ENCODE measurements at regions of chr1 and their contacts with region 1.

Region 1: GRCh38 chr1:112882271-112882744 is 73.7 kb downstream of the SLC16A1 start:
- DNase-seq: no peak
- H3K4me3 Mint-ChIP-seq: no peak overlapping the region
- H3K27ac Mint-ChIP-seq: no peak overlapping the region
- H3K4me1 Mint-ChIP-seq: no peaks in the 10 kb centered on the region
- H3K27me3 Mint-ChIP-seq: peaks cover 31% of the 10 kb centered on the region

Region 2: DNA sequence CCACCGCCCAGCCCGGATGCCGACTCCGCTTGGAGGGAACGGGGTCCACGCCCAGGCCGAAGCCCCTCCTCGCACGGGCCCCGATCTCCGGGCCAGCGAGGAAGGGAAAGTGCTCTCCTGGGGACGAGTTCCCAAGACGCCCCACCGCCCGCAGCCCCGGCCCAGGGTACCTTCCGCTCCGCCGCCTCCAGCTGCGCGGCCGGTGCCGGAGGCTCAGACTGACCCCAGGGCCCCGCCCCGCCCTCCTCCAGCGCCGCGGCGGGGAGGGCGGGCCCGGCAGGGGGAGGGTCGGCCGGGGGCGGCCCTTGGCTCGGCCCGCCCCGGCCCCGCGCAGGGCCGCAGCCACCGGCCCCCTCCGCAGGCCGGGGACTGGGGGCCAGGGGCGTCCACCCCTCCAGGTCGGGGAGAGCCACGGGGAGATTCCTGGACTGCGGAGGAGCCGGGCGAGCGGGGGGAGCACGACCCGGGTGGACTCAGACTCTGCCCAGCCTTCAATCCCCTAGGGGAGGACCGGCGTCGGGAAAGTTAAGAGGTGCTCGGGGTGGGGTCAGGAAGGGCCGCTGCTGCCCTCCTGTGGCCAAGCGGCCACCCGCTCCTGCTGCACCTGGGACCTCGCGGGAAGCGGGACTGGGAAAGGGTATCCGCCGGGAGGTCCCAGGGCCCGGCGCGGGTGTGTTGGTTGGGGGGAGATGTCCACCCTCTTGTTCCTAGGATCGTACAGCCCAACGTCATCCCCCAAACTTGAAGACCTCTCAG is 175.2 kb before region 1 on chr1 and contains the start of gene RHOC:
- CTCF ChIA-PET with region 1: no interaction called
- DNase-seq: peak; percentile 73
- H3K4me3 Mint-ChIP-seq: peak within 1 kb of the TSS; percentile 81
- H3K27ac Mint-ChIP-seq: no peak within 1 kb of the TSS
- H3K4me1 Mint-ChIP-seq: peaks cover 45% of the 10 kb centered on the region
- H3K27me3 Mint-ChIP-seq: peaks cover 49% of the 10 kb centered on the region

Region 3: GRCh38 chr1:113042285-113043143 is 160.2 kb after region 1 on chr1:
- CTCF ChIA-PET with region 1: interaction called, 14 read pairs
- DNase-seq: peak; percentile 41
- H3K4me3 Mint-ChIP-seq: no peak overlapping the region
- H3K27ac Mint-ChIP-seq: no peak overlapping the region
- H3K4me1 Mint-ChIP-seq: peaks cover 50% of the 10 kb centered on the region
- H3K27me3 Mint-ChIP-seq: peaks cover 10% of the 10 kb centered on the region

Region 4: GRCh38 chr1:113353581-113353980 is 471.3 kb after region 1 on chr1:
- CTCF ChIA-PET with region 1: no interaction called
- DNase-seq: no peak
- H3K4me3 Mint-ChIP-seq: no peak overlapping the region
- H3K27ac Mint-ChIP-seq: no peak overlapping the region
- H3K4me1 Mint-ChIP-seq: no peaks in the 10 kb centered on the region
- H3K27me3 Mint-ChIP-seq: peaks cover 11% of the 10 kb centered on the region

Measured in activated naive CD4-positive, alpha-beta T cell treated with anti-CD3 and anti-CD28 coated beads, Interleukin-2, amount 10 ng/mL, durations not matched to agents 7 days and 5 days (primary cell).